CD14-positive monocyte (primary cell): ENCODE measurements at regions of chr14 and their contacts with region 1.

Region 1: DNA sequence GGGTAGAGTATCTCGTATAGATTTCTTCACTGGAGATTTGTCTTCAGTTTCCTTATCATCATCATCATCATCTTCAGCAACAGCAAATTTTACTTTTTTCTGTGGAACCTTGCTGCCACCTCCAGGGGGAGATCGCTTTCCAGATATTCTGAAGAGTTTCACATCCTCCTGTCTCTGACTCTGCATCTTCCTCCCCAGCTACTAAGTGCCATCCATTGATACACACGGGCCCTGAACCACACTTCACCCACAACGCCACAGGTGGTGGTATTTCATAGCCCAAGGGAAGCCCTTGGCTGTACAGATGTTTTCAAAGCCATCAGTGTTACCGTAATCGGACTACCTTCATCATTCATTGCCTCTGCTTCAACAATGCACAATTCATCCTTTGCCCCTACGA is 82.2 kb downstream of the PPP2R5C start:
- DNase-seq: peak; percentile 74 to 85 (median 84)
- H3K4me3 ChIP-seq: no peak overlapping the region
- H3K4me3 Mint-ChIP-seq: no peak overlapping the region
- H3K27ac ChIP-seq: peak overlapping the region in 1 of 2 donors; percentile 66
- H3K27ac Mint-ChIP-seq: peak overlapping the region; percentile 60 to 89 (median 84)
- H3K4me1 ChIP-seq: peaks cover 8 to 13% of the 10 kb centered on the region in 2 donors
- H3K4me1 Mint-ChIP-seq: peaks cover 31% of the 10 kb centered on the region
- H3K27me3 ChIP-seq: no peaks in the 10 kb centered on the region
- H3K27me3 Mint-ChIP-seq: peaks cover 0 to under 1% (median 0%) of the 10 kb centered on the region in 3 donors
- CTCF ChIP-seq: peak; percentile 88

Region 2: GRCh38 chr14:101761032-101761880 is 82.4 kb before region 1 on chr14 and contains the start of gene PPP2R5C:
- intact Hi-C with region 1: no loop called
- DNase-seq: peak; percentile 79 to 89 (median 87)
- H3K4me3 ChIP-seq: peak within 1 kb of the TSS; percentile 84 to 95 (median 90)
- H3K4me3 Mint-ChIP-seq: peak within 1 kb of the TSS; percentile 90 to 92
- H3K27ac ChIP-seq: peak within 1 kb of the TSS; percentile 87 to 90
- H3K27ac Mint-ChIP-seq: peak within 1 kb of the TSS; percentile 54 to 91 (median 84)
- H3K4me1 ChIP-seq: peaks cover 11 to 18% of the 10 kb centered on the region in 2 donors
- H3K4me1 Mint-ChIP-seq: peaks cover 17% of the 10 kb centered on the region
- H3K27me3 ChIP-seq: peaks cover 16 to 56% of the 10 kb centered on the region in 2 donors
- H3K27me3 Mint-ChIP-seq: peaks cover 39 to 60% (median 51%) of the 10 kb centered on the region in 3 donors
- CTCF ChIP-seq: no peak
- polyA plus RNA-seq, gene PPP2R5C: 61.9 to 72.5 (median 64.0) TPM

Region 3: DNA sequence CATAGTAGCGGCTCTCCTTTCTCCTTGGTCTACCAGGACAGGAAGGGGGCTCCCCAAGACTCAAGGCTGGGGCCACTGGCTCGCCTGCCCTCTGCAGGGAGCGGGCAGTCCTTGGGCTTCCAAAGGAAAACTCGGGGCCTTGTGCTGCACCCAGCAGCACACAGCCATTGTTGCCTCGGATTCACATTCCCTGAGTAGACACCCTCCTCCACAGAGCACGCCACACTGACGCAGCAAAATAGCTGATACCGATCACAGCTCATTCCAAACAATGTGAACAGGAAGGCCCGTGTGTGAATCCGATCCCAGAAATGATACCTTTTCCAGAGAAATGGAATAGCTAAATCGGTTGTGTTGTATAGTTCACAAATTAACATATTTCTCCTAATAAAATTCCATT is 55.6 kb after region 1 on chr14:
- intact Hi-C with region 1: loop called in 1 of 2 experiments (anchors 5 kb)
- DNase-seq: no peak
- H3K4me3 ChIP-seq: no peak overlapping the region
- H3K4me3 Mint-ChIP-seq: no peak overlapping the region
- H3K27ac ChIP-seq: no peak overlapping the region
- H3K27ac Mint-ChIP-seq: no peak overlapping the region
- H3K4me1 ChIP-seq: no peaks in the 10 kb centered on the region
- H3K4me1 Mint-ChIP-seq: no peaks in the 10 kb centered on the region
- H3K27me3 ChIP-seq: no peaks in the 10 kb centered on the region
- H3K27me3 Mint-ChIP-seq: no peaks in the 10 kb centered on the region
- CTCF ChIP-seq: no peak

Region 4: GRCh38 chr14:101947906-101948665 is 104.4 kb after region 1 on chr14:
- intact Hi-C with region 1: loop called in 1 of 2 experiments (anchors 10 kb)
- DNase-seq: peak; percentile 99 to 100 (median 100)
- H3K4me3 ChIP-seq: peak overlapping the region; percentile 51 to 79 (median 67)
- H3K4me3 Mint-ChIP-seq: peak overlapping the region; percentile 88 to 98
- H3K27ac ChIP-seq: peak overlapping the region; percentile 93 to 96
- H3K27ac Mint-ChIP-seq: peak overlapping the region; percentile 98 to 100 (median 100)
- H3K4me1 ChIP-seq: peaks cover 17 to 27% of the 10 kb centered on the region in 2 donors
- H3K4me1 Mint-ChIP-seq: peaks cover 24% of the 10 kb centered on the region
- H3K27me3 ChIP-seq: peaks cover 6 to 19% of the 10 kb centered on the region in 2 donors
- H3K27me3 Mint-ChIP-seq: peaks cover 31 to 36% (median 35%) of the 10 kb centered on the region in 3 donors
- CTCF ChIP-seq: no peak